Panc1 (cell line): ENCODE measurements at regions of chr15 and their contacts with region 1.

Region 1: DNA sequence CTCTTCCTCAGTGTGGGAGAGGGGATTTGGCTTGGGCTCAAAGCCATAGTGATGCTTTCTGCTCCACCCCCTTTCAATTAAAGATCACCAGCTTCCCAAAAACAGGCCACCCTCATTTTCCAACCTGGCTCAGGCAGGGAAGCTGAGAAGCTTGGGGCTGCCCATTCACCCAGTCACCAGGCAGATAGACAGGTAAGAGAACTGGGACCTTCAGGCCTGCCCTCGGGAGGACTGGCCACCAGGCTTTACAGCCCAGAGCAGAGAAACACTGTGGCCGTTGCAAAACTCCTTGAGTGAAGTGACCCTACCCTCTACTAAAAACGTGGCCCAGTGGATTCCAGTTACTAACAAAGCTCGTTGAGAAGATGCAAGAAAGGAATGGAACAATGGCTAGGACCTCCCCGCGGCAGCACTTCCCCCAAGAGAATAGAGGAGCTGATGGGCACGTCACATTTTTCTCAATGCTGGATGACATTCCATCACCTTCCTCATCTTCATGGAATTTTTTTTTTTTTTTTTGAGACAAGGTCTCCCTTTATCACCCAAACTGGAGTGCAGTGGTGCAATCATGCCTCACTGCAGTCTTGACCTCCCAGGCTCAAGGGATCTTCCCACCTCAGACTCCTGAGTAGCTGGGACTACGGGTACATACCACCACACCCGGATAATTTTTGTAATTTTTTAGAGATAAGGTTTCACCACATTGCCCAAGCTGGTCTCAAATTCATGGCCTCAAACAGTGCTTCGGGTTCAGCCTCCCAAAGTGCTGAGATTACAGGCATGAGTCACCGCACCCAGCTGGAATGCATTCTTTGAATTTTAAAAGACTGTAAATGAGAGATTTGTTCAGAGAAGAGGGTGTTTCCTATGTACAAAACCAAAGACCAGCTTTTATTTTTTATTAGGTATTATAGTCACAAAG is 37.9 kb downstream of the LIPC start:
- DNase-seq: no peak
- ATAC-seq: peak; percentile 80
- H3K4me3 ChIP-seq: no peak overlapping the region
- H3K27ac ChIP-seq: peak overlapping the region; percentile 41; the same call in 1 of the 2 replicates
- H3K4me1 ChIP-seq: peaks cover 3% of the 10 kb centered on the region; the same call in 1 of the 2 replicates
- H3K27me3 ChIP-seq: no peaks in the 10 kb centered on the region
- CTCF ChIP-seq: no peak

Region 2: DNA sequence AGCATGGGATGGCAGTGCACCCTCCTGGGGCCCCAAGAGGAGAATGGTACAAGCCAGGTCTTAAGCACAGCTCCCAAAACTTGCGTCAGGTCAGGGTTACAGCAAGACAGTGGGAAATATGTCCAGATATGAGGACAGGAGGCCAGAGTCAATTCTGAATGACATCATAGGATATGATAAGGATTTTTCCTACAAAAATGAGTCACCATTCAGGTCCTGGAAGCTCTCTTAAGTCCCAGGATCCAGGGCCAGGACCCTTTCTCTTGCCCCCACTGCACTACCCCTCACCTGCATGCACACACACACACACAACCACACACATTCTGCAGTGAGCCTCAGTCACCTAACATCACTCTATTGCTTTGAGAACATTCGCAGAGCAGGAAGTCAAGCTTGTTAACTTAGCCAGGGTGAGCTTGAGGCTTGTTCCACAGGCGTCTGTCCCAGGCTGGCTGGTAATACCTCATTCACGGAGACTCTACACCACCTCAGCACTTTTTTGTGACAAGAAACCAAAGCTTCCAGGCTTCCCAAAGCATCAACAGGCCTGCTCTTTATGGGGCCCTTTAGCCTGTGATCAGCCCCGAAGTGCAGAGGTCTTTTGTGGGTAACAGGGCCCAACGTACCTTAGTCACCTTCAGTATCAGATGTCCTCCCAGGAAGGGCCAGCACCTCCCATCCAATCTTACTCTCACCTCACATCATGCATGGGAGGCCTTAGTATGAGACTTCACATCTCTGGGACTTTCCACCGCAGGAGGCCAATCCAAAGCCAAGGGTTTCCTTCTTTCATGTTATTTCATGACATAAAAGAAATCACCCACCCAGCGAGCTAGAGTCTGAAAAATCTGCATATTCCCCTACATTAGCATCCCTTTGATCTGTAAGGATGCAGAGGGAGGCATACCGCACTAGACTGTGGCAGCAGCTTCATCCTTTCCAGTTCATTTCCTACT is 111.9 kb before region 1 on chr15:
- CTCF ChIA-PET with region 1: no interaction called
- POLR2A ChIA-PET with region 1: no interaction called
- in situ Hi-C with region 1: no loop called
- intact Hi-C with region 1: no loop called
- DNase-seq: no peak
- ATAC-seq: peak; percentile 46; the same call in 1 of the 2 replicates
- H3K4me3 ChIP-seq: no peak overlapping the region
- H3K27ac ChIP-seq: no peak overlapping the region
- H3K4me1 ChIP-seq: no peaks in the 10 kb centered on the region
- H3K27me3 ChIP-seq: no peaks in the 10 kb centered on the region
- CTCF ChIP-seq: no peak

Region 3: GRCh38 chr15:58378254-58379085 is 91.2 kb before region 1 on chr15:
- CTCF ChIA-PET with region 1: interaction called, 11 read pairs
- POLR2A ChIA-PET with region 1: no interaction called
- in situ Hi-C with region 1: no loop called
- intact Hi-C with region 1: no loop called
- DNase-seq: no peak
- ATAC-seq: no peak
- H3K4me3 ChIP-seq: no peak overlapping the region
- H3K27ac ChIP-seq: no peak overlapping the region
- H3K4me1 ChIP-seq: no peaks in the 10 kb centered on the region
- H3K27me3 ChIP-seq: no peaks in the 10 kb centered on the region
- CTCF ChIP-seq: no peak

Region 4: GRCh38 chr15:58805095-58805494 is 335.4 kb after region 1 on chr15:
- CTCF ChIA-PET with region 1: interaction called, 10 read pairs
- POLR2A ChIA-PET with region 1: no interaction called
- in situ Hi-C with region 1: no loop called
- intact Hi-C with region 1: no loop called
- DNase-seq: no peak
- ATAC-seq: no peak
- H3K4me3 ChIP-seq: no peak overlapping the region
- H3K27ac ChIP-seq: no peak overlapping the region
- H3K4me1 ChIP-seq: no peaks in the 10 kb centered on the region
- H3K27me3 ChIP-seq: no peaks in the 10 kb centered on the region
- CTCF ChIP-seq: no peak

Region 5: GRCh38 chr15:58933281-58934113 is 463.8 kb after region 1 on chr15 and contains the start of gene SLTM:
- CTCF ChIA-PET with region 1: no interaction called
- POLR2A ChIA-PET with region 1: interaction called, 12 read pairs
- in situ Hi-C with region 1: no loop called
- intact Hi-C with region 1: no loop called
- DNase-seq: peak; percentile 76
- ATAC-seq: peak; percentile 99
- H3K4me3 ChIP-seq: peak within 1 kb of the TSS; percentile 94 to 98
- H3K27ac ChIP-seq: peak within 1 kb of the TSS; percentile 99
- H3K4me1 ChIP-seq: peaks cover 15% of the 10 kb centered on the region
- H3K27me3 ChIP-seq: no peaks in the 10 kb centered on the region
- CTCF ChIP-seq: no peak
- total RNA-seq, gene SLTM: 75.7 TPM